ENCODE measurements at regions of chr9 and their contacts with region 1.

Region 1: GRCh38 chr9:36023260-36024048 is 13.3 kb upstream of the RECK start:
- DNase-seq: peak; percentile 65
- H3K27ac ChIP-seq: no peak overlapping the region
- CTCF ChIP-seq: peak; percentile 99

Region 2: DNA sequence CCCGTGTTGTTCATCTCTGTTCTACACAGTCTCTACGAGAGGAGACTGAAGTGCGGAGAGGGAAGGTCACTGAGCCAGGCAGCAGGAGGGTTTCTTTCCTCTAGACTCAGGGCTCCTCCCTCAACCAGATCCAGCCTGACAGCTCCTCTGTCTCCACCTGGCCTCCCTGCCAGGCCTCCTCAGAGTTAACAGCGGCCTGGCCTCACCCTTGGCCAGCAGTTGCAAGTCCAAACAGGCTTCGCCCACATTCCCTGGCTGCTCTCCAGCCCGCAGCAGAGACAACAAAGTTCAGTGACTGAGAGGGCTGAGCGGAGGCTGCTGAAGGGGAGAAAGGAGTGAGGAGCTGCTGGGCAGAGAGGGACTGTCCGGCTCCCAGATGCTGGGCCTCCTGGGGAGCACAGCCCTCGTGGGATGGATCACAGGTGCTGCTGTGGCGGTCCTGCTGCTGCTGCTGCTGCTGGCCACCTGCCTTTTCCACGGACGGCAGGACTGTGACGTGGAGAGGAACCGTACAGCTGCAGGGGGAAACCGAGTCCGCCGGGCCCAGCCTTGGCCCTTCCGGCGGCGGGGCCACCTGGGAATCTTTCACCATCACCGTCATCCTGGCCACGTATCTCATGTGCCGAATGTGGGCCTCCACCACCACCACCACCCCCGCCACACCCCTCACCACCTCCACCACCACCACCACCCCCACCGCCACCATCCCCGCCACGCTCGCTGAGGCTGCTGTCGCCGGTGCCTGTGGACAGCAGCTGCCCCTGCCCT is 117.4 kb before region 1 on chr9 and contains the start of gene HRCT1:
- CTCF ChIA-PET with region 1: interaction called, 12 read pairs
- POLR2A ChIA-PET with region 1: no interaction called
- DNase-seq: peak; percentile 88
- H3K27ac ChIP-seq: peak within 1 kb of the TSS; percentile 100
- CTCF ChIP-seq: no peak

Region 3: GRCh38 chr9:35954942-35955546 is 68.4 kb before region 1 on chr9:
- CTCF ChIA-PET with region 1: interaction called, 19 read pairs
- POLR2A ChIA-PET with region 1: no interaction called
- DNase-seq: peak; percentile 66
- H3K27ac ChIP-seq: no peak overlapping the region
- CTCF ChIP-seq: peak; percentile 99

Region 4: GRCh38 chr9:36008774-36009300 is 14.6 kb before region 1 on chr9:
- CTCF ChIA-PET with region 1: interaction called, 19 read pairs
- POLR2A ChIA-PET with region 1: no interaction called
- DNase-seq: peak; percentile 92
- H3K27ac ChIP-seq: no peak overlapping the region
- CTCF ChIP-seq: peak; percentile 100